ENCODE measurements at regions of chr3 and their contacts with region 1.

Region 1: DNA sequence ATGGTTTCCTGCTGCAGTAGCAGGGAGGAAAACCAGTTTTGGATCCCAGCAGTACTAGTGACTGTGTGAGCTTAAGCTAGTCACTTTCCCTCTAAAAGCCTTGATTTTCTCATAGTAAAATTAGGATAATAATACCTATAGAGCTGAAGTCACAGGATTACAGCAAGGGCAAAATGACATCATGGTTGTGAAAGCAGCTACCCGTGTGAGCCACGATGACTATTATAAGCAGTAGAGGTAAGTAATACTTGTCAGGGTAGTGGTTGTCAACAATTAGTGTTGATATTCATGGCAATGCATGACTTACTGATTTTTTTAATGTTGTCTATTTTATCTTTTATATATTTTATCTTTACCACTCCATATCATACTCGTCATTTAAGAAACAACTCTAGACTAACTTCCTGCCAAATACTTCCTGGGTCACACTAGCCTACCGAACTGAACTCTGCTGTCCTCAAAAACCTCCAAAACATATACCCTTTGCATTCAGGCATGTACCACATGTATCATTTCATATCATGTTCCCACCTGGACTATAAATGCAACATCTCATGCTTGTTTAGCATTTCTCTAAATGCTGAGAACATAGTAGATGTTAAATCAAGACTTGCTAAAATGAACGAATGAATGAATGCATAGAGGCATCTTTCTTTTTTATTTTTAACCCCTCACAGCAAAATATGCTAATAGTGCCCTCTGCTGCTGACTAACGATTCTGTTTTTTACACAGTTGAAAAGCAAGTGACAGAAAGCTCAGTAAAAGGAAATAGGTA is 172.6 kb downstream of the P3H2 start:
- DNase-seq: no peak
- ATAC-seq: no peak

Region 2: GRCh38 chr3:189267954-189268613 is 680.1 kb before region 1 on chr3:
- intact Hi-C with region 1: loop called (anchors 10 kb)
- DNase-seq: no peak
- ATAC-seq: no peak

Measured in left ventricle myocardium superior (tissue), 1 donor.